Activated CD4-positive, alpha-beta T cell treated with anti-CD3 and anti-CD28 coated beads, Interleukin-2, amount 10 ng/mL, durations not matched to agents 24 days and 14 days (primary cell): ENCODE measurements at regions of chr1 and their contacts with region 1.

Region 1: DNA sequence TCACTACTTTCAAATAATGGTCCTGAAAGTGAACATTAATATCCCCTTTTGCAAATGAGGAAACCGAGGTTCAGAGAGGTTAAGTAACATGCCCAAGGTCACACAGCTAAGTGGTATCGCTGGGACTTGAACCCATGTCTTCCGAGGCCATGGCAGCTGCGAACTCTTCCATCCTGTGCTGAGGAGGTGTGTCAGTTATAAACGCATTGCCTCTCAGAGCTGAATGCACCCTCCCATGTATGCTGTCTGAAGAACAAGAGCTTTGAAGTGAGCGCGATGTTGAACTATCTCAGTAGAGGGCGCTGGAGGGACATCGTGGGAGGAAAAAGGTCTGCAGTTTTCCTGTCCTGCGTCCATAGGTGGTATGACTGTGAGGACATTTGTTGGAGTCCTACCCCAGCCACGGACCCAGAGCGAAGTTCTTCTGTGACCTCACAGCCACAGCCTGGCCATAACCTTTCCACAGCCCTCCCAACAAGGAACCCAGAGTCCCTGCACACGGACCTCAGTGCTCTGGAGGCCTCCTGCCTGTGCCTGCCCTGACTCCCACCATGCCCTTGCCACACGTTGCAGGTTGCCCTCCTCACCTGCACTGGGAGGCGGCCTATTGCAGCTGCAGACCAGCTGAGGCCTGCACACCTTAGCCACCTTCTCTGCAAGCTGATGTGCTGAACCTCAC is 7.5 kb downstream of the MYOC start:
- DNase-seq: peak; percentile 92
- H3K4me3 Mint-ChIP-seq: no peak overlapping the region
- H3K27ac Mint-ChIP-seq: no peak overlapping the region
- H3K4me1 Mint-ChIP-seq: peaks cover 8% of the 10 kb centered on the region
- H3K27me3 Mint-ChIP-seq: no peaks in the 10 kb centered on the region

Region 2: DNA sequence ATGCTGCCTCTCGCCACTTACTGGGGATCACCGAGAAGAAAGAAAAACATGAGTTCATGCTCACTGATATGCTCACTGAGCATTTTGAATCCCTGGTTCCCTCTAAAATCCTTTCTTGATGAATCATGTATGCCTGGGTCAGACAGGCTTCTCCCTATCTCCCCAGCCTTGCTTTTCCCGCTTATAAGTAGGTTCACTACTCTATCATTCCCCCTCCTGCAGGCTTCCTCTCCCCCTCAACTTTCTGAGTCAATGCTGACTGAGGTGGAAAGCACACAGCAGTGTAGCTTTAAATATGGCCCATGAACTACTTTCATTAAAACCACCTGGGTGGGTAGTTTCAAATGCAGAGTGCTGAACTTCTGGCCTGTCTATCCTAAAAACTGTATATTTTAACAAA is 289.2 kb before region 1 on chr1:
- intact Hi-C with region 1: no loop called
- DNase-seq: no peak
- H3K4me3 Mint-ChIP-seq: no peak overlapping the region
- H3K27ac Mint-ChIP-seq: no peak overlapping the region
- H3K4me1 Mint-ChIP-seq: no peaks in the 10 kb centered on the region
- H3K27me3 Mint-ChIP-seq: peaks cover 4% of the 10 kb centered on the region

Region 3: GRCh38 chr1:171530676-171531075 is 114.3 kb before region 1 on chr1:
- intact Hi-C with region 1: no loop called
- DNase-seq: no peak
- H3K4me3 Mint-ChIP-seq: no peak overlapping the region
- H3K27ac Mint-ChIP-seq: no peak overlapping the region
- H3K4me1 Mint-ChIP-seq: peaks cover 12% of the 10 kb centered on the region
- H3K27me3 Mint-ChIP-seq: no peaks in the 10 kb centered on the region

Region 4: DNA sequence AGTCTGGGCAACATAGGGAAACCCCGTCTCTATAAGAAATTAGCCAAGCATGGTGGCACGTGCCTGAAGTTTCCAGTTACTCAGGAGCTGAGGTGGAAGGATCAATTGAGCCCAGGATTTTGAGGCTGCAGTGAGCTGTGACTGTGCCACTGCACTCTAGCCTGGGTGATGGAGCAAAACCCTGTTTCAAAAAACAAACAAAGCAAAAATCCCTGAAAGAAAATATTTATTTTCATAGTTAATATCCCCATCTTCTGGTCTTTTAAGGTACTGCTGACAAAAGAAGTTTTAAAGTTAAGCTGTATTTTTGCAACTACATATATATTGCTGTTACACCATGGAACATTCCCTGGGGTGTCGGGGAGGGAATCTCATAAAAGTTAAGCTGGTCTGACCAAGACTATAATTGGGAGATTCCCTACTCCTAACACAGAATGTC is 70.9 kb after region 1 on chr1:
- intact Hi-C with region 1: loop called (anchors 5 kb)
- DNase-seq: no peak
- H3K4me3 Mint-ChIP-seq: no peak overlapping the region
- H3K27ac Mint-ChIP-seq: no peak overlapping the region
- H3K4me1 Mint-ChIP-seq: peaks cover 4% of the 10 kb centered on the region
- H3K27me3 Mint-ChIP-seq: no peaks in the 10 kb centered on the region

Region 5: GRCh38 chr1:171781176-171781875 is 136.4 kb after region 1 on chr1 and contains the start of gene METTL13:
- intact Hi-C with region 1: loop called (anchors 5 kb)
- DNase-seq: peak; percentile 100
- H3K4me3 Mint-ChIP-seq: peak within 1 kb of the TSS; percentile 98
- H3K27ac Mint-ChIP-seq: peak within 1 kb of the TSS; percentile 94
- H3K4me1 Mint-ChIP-seq: peaks cover 45% of the 10 kb centered on the region
- H3K27me3 Mint-ChIP-seq: no peaks in the 10 kb centered on the region
- total RNA-seq, gene METTL13: 56.1 and 57.8 TPM in 2 replicates

Region 6: GRCh38 chr1:171984850-171985485 is 340.0 kb after region 1 on chr1:
- intact Hi-C with region 1: loop called (anchors 1 kb)
- DNase-seq: peak; percentile 68
- H3K4me3 Mint-ChIP-seq: no peak overlapping the region
- H3K27ac Mint-ChIP-seq: no peak overlapping the region
- H3K4me1 Mint-ChIP-seq: no peaks in the 10 kb centered on the region
- H3K27me3 Mint-ChIP-seq: peaks cover 10% of the 10 kb centered on the region